Activated CD4-positive, alpha-beta T cell treated with anti-CD3 and anti-CD28 coated beads for 36 hours (primary cell): ENCODE measurements at regions of chr2 and their contacts with region 1.

Region 1: DNA sequence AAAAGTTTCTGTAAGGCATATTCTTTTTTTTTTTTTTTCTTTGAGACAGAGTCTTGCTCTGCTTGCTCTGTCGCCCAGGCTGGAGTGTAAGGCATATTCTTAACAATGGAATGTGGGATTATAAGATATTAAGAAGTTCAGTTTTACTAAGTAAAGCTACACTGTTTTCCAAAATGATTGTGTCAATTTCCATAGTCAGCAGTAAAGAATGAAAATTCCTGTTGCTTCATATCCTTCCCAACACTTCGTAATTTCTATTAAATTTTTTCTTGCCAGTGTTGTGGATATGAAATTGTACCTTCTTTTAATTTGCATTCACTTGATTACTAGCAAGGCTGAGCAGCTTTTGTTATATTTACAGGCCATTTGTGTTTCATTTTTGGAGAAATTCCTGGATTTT is 24.4 kb upstream of the SLC4A10 start:
- DNase-seq: no peak
- ATAC-seq: no peak
- H3K4me3 Mint-ChIP-seq: no peak overlapping the region
- H3K27ac Mint-ChIP-seq: no peak overlapping the region
- H3K4me1 Mint-ChIP-seq: peaks cover 5% of the 10 kb centered on the region
- H3K27me3 Mint-ChIP-seq: peaks cover 20% of the 10 kb centered on the region

Region 2: GRCh38 chr2:161283926-161284325 is 315.9 kb before region 1 on chr2:
- CTCF ChIA-PET with region 1: no interaction called
- POLR2A ChIA-PET with region 1: no interaction called
- intact Hi-C with region 1: no loop called
- DNase-seq: no peak
- ATAC-seq: no peak
- H3K4me3 Mint-ChIP-seq: no peak overlapping the region
- H3K27ac Mint-ChIP-seq: no peak overlapping the region
- H3K4me1 Mint-ChIP-seq: no peaks in the 10 kb centered on the region
- H3K27me3 Mint-ChIP-seq: peaks cover 5% of the 10 kb centered on the region

Region 3: GRCh38 chr2:161586517-161587167 is 13.2 kb before region 1 on chr2:
- CTCF ChIA-PET with region 1: interaction called, 10 read pairs
- POLR2A ChIA-PET with region 1: no interaction called
- intact Hi-C with region 1: no loop called
- DNase-seq: no peak
- ATAC-seq: no peak
- H3K4me3 Mint-ChIP-seq: no peak overlapping the region
- H3K27ac Mint-ChIP-seq: no peak overlapping the region
- H3K4me1 Mint-ChIP-seq: no peaks in the 10 kb centered on the region
- H3K27me3 Mint-ChIP-seq: peaks cover 7% of the 10 kb centered on the region